ENCODE measurements at regions of chr1 and their contacts with region 1.

Region 1: GRCh38 chr1:234309598-234310459 is 63.4 kb upstream of the COA6 start:
- DNase-seq: peak; percentile 75
- H3K4me3 Mint-ChIP-seq: no peak overlapping the region
- H3K27ac Mint-ChIP-seq: no peak overlapping the region
- H3K4me1 Mint-ChIP-seq: peaks cover 6% of the 10 kb centered on the region
- H3K27me3 Mint-ChIP-seq: no peaks in the 10 kb centered on the region

Region 2: GRCh38 chr1:233993651-233994050 is 316.2 kb before region 1 on chr1:
- CTCF ChIA-PET with region 1: no interaction called
- POLR2A ChIA-PET with region 1: no interaction called
- DNase-seq: no peak
- H3K4me3 Mint-ChIP-seq: no peak overlapping the region
- H3K27ac Mint-ChIP-seq: no peak overlapping the region
- H3K4me1 Mint-ChIP-seq: peaks cover 4% of the 10 kb centered on the region
- H3K27me3 Mint-ChIP-seq: peaks cover 18% of the 10 kb centered on the region

Region 3: DNA sequence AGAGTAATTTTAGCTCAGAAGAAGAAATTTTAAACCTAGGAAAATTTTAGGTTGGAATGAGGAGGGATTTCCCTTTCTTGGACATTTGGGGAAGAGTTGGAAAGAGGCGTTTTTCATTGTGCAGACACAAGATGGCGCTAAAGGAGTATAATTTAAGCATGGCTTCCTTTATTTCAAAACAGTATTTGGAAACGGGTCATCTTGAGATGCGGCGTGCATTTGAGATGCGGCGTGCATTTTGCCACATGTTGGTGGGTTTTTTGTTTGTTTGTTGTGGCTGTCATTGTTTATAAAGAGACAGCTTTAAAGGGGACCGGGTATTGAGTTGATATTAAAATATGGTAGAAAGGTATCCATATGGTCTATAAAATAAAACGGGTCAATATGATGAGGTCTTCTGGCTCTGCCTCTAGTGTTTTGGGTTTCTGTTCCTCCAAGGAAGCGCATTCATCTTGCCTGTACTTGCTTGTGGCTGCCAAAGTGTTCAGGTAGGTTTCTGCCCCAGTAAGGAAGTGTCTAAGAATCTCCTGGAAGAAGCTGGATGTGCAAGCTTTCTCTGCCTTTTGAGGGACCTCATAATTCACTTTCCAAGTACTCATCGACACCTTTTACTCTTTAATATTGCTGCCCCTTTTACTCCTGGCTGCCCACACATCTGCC is 195.1 kb before region 1 on chr1:
- CTCF ChIA-PET with region 1: interaction called, 62 read pairs
- POLR2A ChIA-PET with region 1: no interaction called
- DNase-seq: peak; percentile 28
- H3K4me3 Mint-ChIP-seq: no peak overlapping the region
- H3K27ac Mint-ChIP-seq: no peak overlapping the region
- H3K4me1 Mint-ChIP-seq: peaks cover 6% of the 10 kb centered on the region
- H3K27me3 Mint-ChIP-seq: peaks cover 27% of the 10 kb centered on the region

Region 4: GRCh38 chr1:234125283-234125682 is 184.5 kb before region 1 on chr1:
- CTCF ChIA-PET with region 1: interaction called, 23 read pairs
- POLR2A ChIA-PET with region 1: no interaction called
- DNase-seq: peak; percentile 46
- H3K4me3 Mint-ChIP-seq: no peak overlapping the region
- H3K27ac Mint-ChIP-seq: no peak overlapping the region
- H3K4me1 Mint-ChIP-seq: no peaks in the 10 kb centered on the region
- H3K27me3 Mint-ChIP-seq: peaks cover 29% of the 10 kb centered on the region

Region 5: GRCh38 chr1:234154320-234155251 is 155.2 kb before region 1 on chr1:
- CTCF ChIA-PET with region 1: interaction called, 13 read pairs
- POLR2A ChIA-PET with region 1: no interaction called
- DNase-seq: peak; percentile 24
- H3K4me3 Mint-ChIP-seq: no peak overlapping the region
- H3K27ac Mint-ChIP-seq: no peak overlapping the region
- H3K4me1 Mint-ChIP-seq: peaks cover 3% of the 10 kb centered on the region
- H3K27me3 Mint-ChIP-seq: peaks cover 20% of the 10 kb centered on the region

Region 6: DNA sequence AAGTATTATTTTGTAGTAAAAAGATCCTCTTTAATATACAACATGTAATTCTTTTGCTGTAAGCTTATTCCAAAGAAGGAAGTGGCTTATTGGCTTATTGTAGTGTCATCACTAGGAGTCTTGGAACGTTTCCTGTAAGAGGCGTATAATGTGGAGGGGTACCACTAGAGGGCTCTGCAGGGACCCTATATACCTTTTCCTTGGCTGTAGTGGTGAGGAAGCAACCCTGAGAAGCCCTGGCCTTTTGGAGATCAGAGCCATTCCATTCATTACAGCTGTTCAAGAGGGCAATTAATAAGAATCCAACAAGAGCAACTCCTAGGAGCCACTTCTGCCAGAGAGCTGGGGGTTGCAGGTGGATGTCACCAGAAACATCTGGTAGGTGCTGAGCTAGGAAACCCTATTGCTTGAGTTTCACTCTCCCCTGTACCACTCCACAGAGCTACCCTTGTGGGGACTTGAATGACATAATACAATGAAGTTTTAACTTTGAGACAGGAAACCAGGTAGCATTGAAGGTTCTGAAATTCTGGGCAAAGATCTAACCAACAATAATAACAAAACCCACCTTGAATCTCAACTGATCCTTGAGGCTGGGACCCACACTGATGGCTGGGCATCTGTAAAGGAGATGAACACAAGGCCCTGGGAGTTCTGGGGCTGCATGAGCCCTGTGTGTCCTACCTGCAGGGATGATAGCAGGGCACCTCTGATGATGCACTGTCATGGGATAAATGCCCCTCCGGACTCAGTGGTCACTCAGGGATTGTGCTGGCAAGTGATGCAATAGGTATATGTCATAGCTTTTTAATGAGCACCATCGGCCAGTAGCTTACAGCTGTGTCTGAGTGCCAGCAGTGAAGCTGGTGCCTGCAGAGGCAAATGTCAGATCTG is 96.8 kb before region 1 on chr1:
- CTCF ChIA-PET with region 1: interaction called, 108 read pairs
- POLR2A ChIA-PET with region 1: interaction called, 6 read pairs
- DNase-seq: peak; percentile 35
- H3K4me3 Mint-ChIP-seq: peak overlapping the region; percentile 77
- H3K27ac Mint-ChIP-seq: peak overlapping the region; percentile 50
- H3K4me1 Mint-ChIP-seq: peaks cover 43% of the 10 kb centered on the region
- H3K27me3 Mint-ChIP-seq: peaks cover 6% of the 10 kb centered on the region

Region 7: DNA sequence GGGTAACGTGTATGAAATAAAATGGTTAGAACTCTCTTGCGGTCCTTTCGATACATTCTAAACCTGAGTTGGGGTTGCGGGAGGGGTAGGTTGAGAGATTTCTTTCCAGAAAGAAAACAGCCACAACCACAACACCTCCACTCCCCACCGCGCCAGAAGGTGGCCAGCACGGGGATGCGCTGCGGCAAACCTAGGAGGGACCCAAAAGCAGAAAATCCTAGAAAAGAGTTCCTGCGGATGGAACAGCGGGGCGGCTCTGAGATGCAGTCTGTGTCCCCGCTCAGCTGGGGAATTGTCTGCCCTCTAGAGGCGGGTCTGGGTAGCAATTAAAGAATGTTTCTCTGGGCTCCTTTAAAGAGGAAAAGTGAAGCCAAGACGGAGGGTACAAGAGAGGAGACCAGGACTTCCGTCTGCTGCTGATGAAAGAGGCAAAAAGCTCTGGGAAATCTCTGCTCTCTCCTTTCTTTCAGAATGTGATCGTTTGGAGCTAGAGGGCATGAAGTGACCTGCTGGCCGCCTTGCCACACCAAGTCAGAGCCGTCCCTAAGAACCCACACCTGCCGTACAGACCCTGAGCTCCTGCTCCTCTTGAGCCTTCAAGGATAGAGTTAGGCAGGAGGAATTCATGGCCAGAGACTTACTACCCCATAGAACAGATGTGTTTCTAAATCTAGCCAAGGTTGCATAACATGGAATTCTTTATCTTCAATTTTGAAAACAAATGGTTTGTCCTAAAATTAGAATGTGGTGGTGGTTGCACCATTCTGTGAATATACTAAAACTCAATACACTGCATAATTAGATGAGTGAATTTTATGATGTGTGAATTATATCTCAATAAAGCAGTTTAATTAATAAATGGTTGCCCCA is 16.9 kb after region 1 on chr1:
- CTCF ChIA-PET with region 1: interaction called, 27 read pairs
- POLR2A ChIA-PET with region 1: no interaction called
- DNase-seq: peak; percentile 70
- H3K4me3 Mint-ChIP-seq: peak overlapping the region; percentile 71
- H3K27ac Mint-ChIP-seq: peak overlapping the region; percentile 5
- H3K4me1 Mint-ChIP-seq: peaks cover 16% of the 10 kb centered on the region
- H3K27me3 Mint-ChIP-seq: peaks cover 6% of the 10 kb centered on the region